ENCODE measurements at regions of chr14 and their contacts with region 1.

Region 1: GRCh38 chr14:65287264-65288131 is 125.0 kb upstream of the FUT8 start:
- DNase-seq: peak; percentile 61 to 72 (median 71)
- H3K4me3 ChIP-seq: peak overlapping the region in 1 of 2 donors; percentile 4
- H3K4me3 Mint-ChIP-seq: peak overlapping the region; percentile 80 to 94 (median 88)
- H3K27ac ChIP-seq: peak overlapping the region; percentile 53
- H3K27ac Mint-ChIP-seq: peak overlapping the region; percentile 91 to 97 (median 94)
- H3K4me1 ChIP-seq: peaks cover 67% of the 10 kb centered on the region
- H3K4me1 Mint-ChIP-seq: peaks cover 49 to 81% (median 60%) of the 10 kb centered on the region in 4 donors
- H3K27me3 ChIP-seq: no peaks in the 10 kb centered on the region
- H3K27me3 Mint-ChIP-seq: no peaks in the 10 kb centered on the region

Region 2: DNA sequence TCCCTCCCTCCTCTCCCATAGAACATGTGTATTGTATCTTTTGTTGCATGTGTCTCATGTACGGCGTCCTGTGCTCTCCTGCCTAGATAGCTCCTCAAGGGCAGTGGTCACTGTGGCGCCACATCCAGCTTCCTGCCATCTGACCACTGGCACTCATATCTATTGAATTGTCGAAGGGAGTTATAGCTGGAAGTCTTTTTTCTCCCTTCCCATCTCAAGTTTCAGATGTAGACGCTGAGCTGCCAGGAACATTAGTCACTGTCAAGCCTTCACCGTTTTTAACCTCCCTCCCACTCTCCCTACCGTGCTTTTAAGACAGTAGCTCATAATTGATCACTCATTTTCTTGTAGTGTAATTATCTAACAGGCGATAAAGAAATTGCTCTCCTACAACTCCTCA is 866.3 kb before region 1 on chr14:
- CTCF ChIA-PET with region 1: no interaction called
- POLR2A ChIA-PET with region 1: no interaction called
- intact Hi-C with region 1: no loop called
- DNase-seq: no peak
- H3K4me3 ChIP-seq: no peak overlapping the region
- H3K4me3 Mint-ChIP-seq: no peak overlapping the region
- H3K27ac ChIP-seq: no peak overlapping the region
- H3K27ac Mint-ChIP-seq: peak overlapping the region in 1 of 7 donors; percentile 10
- H3K4me1 ChIP-seq: no peaks in the 10 kb centered on the region
- H3K4me1 Mint-ChIP-seq: peaks cover 0 to 4% (median under 1%) of the 10 kb centered on the region in 4 donors
- H3K27me3 ChIP-seq: no peaks in the 10 kb centered on the region
- H3K27me3 Mint-ChIP-seq: no peaks in the 10 kb centered on the region

Region 3: GRCh38 chr14:65170768-65171507 is 116.6 kb before region 1 on chr14:
- CTCF ChIA-PET with region 1: no interaction called
- POLR2A ChIA-PET with region 1: interaction called, 4 read pairs
- intact Hi-C with region 1: loop called (anchors 5 kb)
- DNase-seq: peak; percentile 39 to 73 (median 43)
- H3K4me3 ChIP-seq: peak overlapping the region; percentile 39 to 45
- H3K4me3 Mint-ChIP-seq: peak overlapping the region; percentile 79 to 88 (median 83)
- H3K27ac ChIP-seq: no peak overlapping the region
- H3K27ac Mint-ChIP-seq: peak overlapping the region in 6 of 7 donors; percentile 8 to 87 (median 66)
- H3K4me1 ChIP-seq: peaks cover 8% of the 10 kb centered on the region
- H3K4me1 Mint-ChIP-seq: peaks cover 11 to 18% (median 13%) of the 10 kb centered on the region in 4 donors
- H3K27me3 ChIP-seq: no peaks in the 10 kb centered on the region
- H3K27me3 Mint-ChIP-seq: peaks cover 0 to 2% of the 10 kb centered on the region in 2 donors

Region 4: GRCh38 chr14:65206448-65207096 is 80.9 kb before region 1 on chr14:
- CTCF ChIA-PET with region 1: interaction called, 4 read pairs
- POLR2A ChIA-PET with region 1: interaction called, 28 read pairs
- intact Hi-C with region 1: no loop called
- DNase-seq: no peak
- H3K4me3 ChIP-seq: no peak overlapping the region
- H3K4me3 Mint-ChIP-seq: peak overlapping the region; percentile 50 to 89 (median 82)
- H3K27ac ChIP-seq: peak overlapping the region; percentile 47
- H3K27ac Mint-ChIP-seq: peak overlapping the region; percentile 78 to 98 (median 94)
- H3K4me1 ChIP-seq: peaks cover 72% of the 10 kb centered on the region
- H3K4me1 Mint-ChIP-seq: peaks cover 50 to 77% (median 62%) of the 10 kb centered on the region in 4 donors
- H3K27me3 ChIP-seq: no peaks in the 10 kb centered on the region
- H3K27me3 Mint-ChIP-seq: no peaks in the 10 kb centered on the region

Region 5: DNA sequence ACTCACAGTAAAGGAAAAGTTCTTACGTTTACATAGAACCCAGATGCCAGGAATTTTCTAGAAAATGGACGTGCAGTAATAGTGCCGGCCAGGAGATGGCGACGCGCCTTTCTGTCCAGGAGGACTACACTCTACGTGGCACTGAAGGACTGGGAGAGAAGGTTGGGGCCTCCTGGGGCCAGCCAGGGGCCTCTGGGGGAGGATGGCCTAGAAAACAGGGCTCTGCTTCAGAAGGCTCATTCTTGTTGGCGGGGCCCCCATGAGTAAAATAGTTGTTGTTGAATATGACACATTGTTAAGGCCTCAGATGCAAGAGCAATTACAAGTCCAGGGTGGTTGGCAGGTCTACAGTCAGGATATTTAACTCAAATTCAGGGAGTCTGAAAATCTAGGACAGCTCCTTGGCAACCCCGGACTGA is 65.0 kb before region 1 on chr14:
- CTCF ChIA-PET with region 1: interaction called, 5 read pairs
- POLR2A ChIA-PET with region 1: interaction called, 12 read pairs
- intact Hi-C with region 1: loop called (anchors 2 kb)
- DNase-seq: peak; percentile 45 to 55 (median 48)
- H3K4me3 ChIP-seq: no peak overlapping the region
- H3K4me3 Mint-ChIP-seq: peak overlapping the region in 1 of 8 donors; percentile 64
- H3K27ac ChIP-seq: no peak overlapping the region
- H3K27ac Mint-ChIP-seq: peak overlapping the region; percentile 0 to 83 (median 42)
- H3K4me1 ChIP-seq: peaks cover 34% of the 10 kb centered on the region
- H3K4me1 Mint-ChIP-seq: peaks cover 23 to 59% (median 38%) of the 10 kb centered on the region in 4 donors
- H3K27me3 ChIP-seq: no peaks in the 10 kb centered on the region
- H3K27me3 Mint-ChIP-seq: no peaks in the 10 kb centered on the region

Region 6: DNA sequence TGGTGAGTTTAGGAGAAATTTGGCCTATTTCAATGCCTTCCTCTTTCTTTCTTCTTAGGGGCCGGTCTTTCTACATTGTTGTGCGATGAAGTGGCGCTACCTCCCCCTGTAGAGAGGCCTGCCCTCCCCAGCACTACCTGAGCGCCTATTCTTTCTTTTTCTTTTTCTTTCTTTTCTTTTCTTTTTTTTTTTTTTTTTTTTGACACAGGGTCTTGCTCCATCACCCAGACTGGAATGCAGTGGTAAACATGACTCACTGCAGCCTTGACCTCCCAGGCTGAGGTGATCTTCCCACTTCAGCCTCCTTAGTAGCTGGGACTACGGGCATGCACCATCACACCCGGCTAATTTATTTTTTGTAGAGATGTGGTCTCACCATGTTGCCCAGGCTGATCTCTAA is 49.0 kb before region 1 on chr14:
- CTCF ChIA-PET with region 1: no interaction called
- POLR2A ChIA-PET with region 1: no interaction called
- intact Hi-C with region 1: no loop called
- DNase-seq: no peak
- H3K4me3 ChIP-seq: no peak overlapping the region
- H3K4me3 Mint-ChIP-seq: no peak overlapping the region
- H3K27ac ChIP-seq: no peak overlapping the region
- H3K27ac Mint-ChIP-seq: peak overlapping the region in 1 of 7 donors; percentile 35
- H3K4me1 ChIP-seq: peaks cover 6% of the 10 kb centered on the region
- H3K4me1 Mint-ChIP-seq: peaks cover 7 to 16% (median 14%) of the 10 kb centered on the region in 4 donors
- H3K27me3 ChIP-seq: no peaks in the 10 kb centered on the region
- H3K27me3 Mint-ChIP-seq: no peaks in the 10 kb centered on the region

Region 7: DNA sequence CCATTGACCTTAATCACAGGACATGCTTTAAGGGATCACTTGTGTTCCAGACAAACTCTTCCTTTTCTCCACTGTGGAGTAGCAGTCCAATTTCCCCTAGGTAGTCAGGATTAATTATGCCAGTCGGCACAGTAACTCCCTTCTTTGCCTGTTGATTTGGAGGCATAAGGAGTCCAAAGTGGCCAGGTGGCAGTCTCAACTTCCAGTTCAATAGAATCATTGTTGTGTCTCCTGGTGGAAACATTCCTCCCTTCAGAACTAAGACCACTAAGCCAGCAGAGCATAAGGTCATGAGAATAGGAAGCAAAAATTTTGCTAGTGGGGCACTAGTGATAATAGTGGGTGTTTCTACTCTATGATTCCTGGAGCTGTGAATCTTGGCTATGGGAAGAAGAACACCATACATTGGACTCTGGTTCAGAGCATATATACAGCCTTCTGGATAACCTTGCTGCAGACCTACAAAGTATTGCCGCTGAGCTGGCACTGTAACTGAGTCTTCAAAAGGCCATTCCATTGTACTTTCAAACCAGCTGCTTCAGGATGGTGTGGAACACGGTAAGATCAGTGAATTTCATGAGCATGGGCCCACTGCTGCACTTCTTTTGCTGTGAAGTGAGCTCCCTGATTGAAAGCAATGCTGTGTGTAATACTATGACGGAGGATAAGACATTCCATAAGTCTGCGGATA is 37.9 kb before region 1 on chr14:
- CTCF ChIA-PET with region 1: no interaction called
- POLR2A ChIA-PET with region 1: interaction called, 4 read pairs
- intact Hi-C with region 1: loop called (anchors 5 kb)
- DNase-seq: no peak
- H3K4me3 ChIP-seq: no peak overlapping the region
- H3K4me3 Mint-ChIP-seq: no peak overlapping the region
- H3K27ac ChIP-seq: no peak overlapping the region
- H3K27ac Mint-ChIP-seq: no peak overlapping the region
- H3K4me1 ChIP-seq: peaks cover 5% of the 10 kb centered on the region
- H3K4me1 Mint-ChIP-seq: peaks cover 3 to 16% (median 9%) of the 10 kb centered on the region in 4 donors
- H3K27me3 ChIP-seq: no peaks in the 10 kb centered on the region
- H3K27me3 Mint-ChIP-seq: no peaks in the 10 kb centered on the region

Region 8: GRCh38 chr14:65277027-65277426 is 10.5 kb before region 1 on chr14:
- CTCF ChIA-PET with region 1: interaction called, 5 read pairs
- POLR2A ChIA-PET with region 1: interaction called, 14 read pairs
- intact Hi-C with region 1: no loop called
- DNase-seq: no peak
- H3K4me3 ChIP-seq: no peak overlapping the region
- H3K4me3 Mint-ChIP-seq: no peak overlapping the region
- H3K27ac ChIP-seq: no peak overlapping the region
- H3K27ac Mint-ChIP-seq: peak overlapping the region in 1 of 7 donors; percentile 51
- H3K4me1 ChIP-seq: peaks cover 5% of the 10 kb centered on the region
- H3K4me1 Mint-ChIP-seq: peaks cover 4 to 10% (median 5%) of the 10 kb centered on the region in 4 donors
- H3K27me3 ChIP-seq: no peaks in the 10 kb centered on the region
- H3K27me3 Mint-ChIP-seq: no peaks in the 10 kb centered on the region

Region 9: DNA sequence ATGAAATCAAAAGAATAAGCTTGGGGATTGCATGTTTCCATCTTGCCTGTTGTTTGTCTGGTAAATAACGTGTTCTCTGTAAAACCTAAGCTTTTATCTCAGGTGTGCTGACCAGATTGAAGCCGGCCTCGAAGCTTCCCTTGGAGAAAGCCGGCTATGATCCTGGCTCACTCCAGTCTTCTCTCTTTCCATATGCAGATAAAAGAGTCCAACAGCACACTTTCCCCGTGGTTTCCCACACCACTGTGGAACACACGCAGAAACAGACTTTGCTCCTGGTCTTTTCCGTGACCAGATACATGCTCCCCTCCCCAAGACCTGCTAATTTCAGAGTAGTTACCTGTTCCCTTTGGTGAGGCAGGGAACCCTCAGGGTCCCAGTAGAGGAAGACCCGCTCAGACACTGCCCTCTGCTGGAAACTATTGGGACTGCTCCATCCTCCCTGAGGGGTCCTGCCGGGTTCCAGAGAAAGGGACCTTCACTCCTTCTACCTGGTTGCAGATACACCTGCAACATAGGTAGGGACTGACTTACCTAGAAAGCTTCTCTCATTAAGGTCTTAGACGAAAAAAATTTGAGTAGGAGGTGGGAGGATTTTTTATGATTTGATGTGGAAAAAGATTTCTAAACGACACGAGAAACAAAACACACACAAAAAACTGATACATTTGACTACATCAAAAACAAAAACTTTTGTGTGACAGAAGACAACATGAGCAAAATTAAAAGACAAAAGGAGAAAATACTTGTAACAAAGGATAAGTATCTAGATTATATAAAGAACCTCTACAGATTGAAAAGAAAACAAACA is 783.2 kb after region 1 on chr14:
- CTCF ChIA-PET with region 1: interaction called, 3 read pairs
- POLR2A ChIA-PET with region 1: no interaction called
- intact Hi-C with region 1: loop called (anchors 1 kb)
- DNase-seq: peak; percentile 52 to 70 (median 53)
- H3K4me3 ChIP-seq: no peak overlapping the region
- H3K4me3 Mint-ChIP-seq: peak overlapping the region in 1 of 8 donors; percentile 27
- H3K27ac ChIP-seq: no peak overlapping the region
- H3K27ac Mint-ChIP-seq: peak overlapping the region in 3 of 7 donors; percentile 36 to 54 (median 37)
- H3K4me1 ChIP-seq: no peaks in the 10 kb centered on the region
- H3K4me1 Mint-ChIP-seq: peaks cover 3 to 6% (median 6%) of the 10 kb centered on the region in 4 donors
- H3K27me3 ChIP-seq: no peaks in the 10 kb centered on the region
- H3K27me3 Mint-ChIP-seq: peaks cover 0 to 4% of the 10 kb centered on the region in 2 donors